Heart right ventricle (tissue), 16 donors: ENCODE measurements at regions of chr10 and their contacts with region 1.

Region 1: GRCh38 chr10:28532383-28533175 is at the start of gene WAC:
- DNase-seq: peak; percentile 96 to 98
- ATAC-seq: peak; percentile 95 to 98 (median 98)
- H3K4me3 ChIP-seq: peak within 1 kb of the TSS; percentile 81 to 94 (median 92)
- H3K27ac ChIP-seq: peak within 1 kb of the TSS; percentile 97 to 100 (median 99)
- H3K4me1 ChIP-seq: peaks cover 0 to 54% (median 44%) of the 10 kb centered on the region in 9 donors
- H3K27me3 ChIP-seq: no peaks in the 10 kb centered on the region
- CTCF ChIP-seq: peak in 3 of 9 donors; percentile 10 to 33 (median 15)
- total RNA-seq, gene WAC: 83.8 to 134 (median 95.3) TPM

Region 2: DNA sequence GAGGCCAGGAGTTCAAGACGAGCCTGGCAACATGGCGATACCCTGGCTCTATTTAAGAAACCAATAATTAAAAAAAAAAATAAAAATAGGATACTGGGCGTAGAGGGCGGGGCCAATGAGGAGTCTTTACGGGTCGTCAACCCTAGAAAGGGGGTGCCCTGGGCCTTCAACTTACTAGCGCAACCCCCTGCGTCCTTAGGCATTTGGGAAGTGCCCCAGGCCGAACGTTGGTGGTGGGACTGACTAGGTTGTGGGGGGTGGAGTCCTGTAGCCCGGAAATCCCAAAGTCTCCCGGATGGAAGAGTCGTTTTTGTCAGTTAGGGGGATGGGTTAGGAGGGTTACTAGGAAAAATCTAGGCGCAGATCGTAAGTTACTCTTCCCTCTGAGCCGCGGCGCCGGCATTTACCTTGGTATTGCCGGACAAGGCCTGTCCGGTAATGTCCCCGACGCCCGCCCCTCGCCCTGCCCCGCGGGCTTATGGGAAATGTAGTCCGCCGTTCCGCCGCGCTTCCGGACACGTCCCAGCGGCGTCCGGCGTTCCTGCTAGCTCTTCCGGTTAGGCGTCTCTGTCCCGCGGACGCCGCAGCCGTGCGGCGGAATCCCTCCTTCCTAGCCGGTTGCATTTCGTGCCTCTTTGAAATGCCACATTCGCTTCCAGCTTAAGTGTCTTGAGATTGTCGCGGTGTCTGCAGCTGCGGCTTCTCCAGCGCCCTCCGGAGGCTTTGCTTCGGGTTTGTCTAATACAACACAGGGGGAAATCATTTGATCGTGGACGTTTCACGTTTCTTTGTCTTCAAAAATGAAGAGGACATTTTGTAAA is 1290.7 kb before region 1 on chr10:
- intact Hi-C with region 1: loop called in 1 of 10 experiments (anchors 10 kb)
- DNase-seq: peak; percentile 91 to 93
- ATAC-seq: peak; percentile 90 to 95 (median 92)
- H3K4me3 ChIP-seq: peak overlapping the region; percentile 58 to 84 (median 76)
- H3K27ac ChIP-seq: peak overlapping the region; percentile 92 to 99 (median 96)
- H3K4me1 ChIP-seq: peaks cover 4 to 48% (median 40%) of the 10 kb centered on the region in 9 donors
- H3K27me3 ChIP-seq: no peaks in the 10 kb centered on the region
- CTCF ChIP-seq: peak in 8 of 9 donors; percentile 5 to 52 (median 36)

Region 3: DNA sequence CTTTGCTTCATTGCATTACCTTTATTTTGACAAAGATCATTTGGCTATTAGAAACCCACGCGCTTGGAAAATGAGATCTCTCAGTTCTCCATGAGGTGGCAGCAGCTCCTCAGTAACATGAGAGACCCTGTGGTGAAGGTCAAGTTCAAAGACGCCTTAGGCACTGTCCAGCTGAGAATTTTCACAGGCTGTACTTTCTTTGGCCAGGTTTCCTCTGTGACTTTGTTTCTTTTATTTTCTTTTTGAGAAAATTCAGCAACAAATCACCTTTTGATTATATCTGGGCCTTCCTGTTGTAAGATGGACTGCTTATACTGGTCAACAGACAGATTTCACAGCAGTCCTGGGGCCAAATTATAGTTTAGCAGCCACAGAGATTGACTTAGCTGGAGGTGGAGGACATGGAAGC is 974.0 kb before region 1 on chr10:
- intact Hi-C with region 1: no loop called
- DNase-seq: peak in 1 of 2 donors; percentile 66
- ATAC-seq: peak; percentile 67 to 93 (median 84)
- H3K4me3 ChIP-seq: no peak overlapping the region
- H3K27ac ChIP-seq: no peak overlapping the region
- H3K4me1 ChIP-seq: no peaks in the 10 kb centered on the region
- H3K27me3 ChIP-seq: no peaks in the 10 kb centered on the region
- CTCF ChIP-seq: peak; percentile 35 to 79 (median 72)

Region 4: GRCh38 chr10:28587970-28588290 is 55.4 kb after region 1 on chr10:
- intact Hi-C with region 1: loop called in 2 of 10 experiments (anchors 5 kb)
- DNase-seq: no peak
- ATAC-seq: peak; percentile 61 to 89 (median 82)
- H3K4me3 ChIP-seq: no peak overlapping the region
- H3K27ac ChIP-seq: peak overlapping the region in 4 of 10 donors; percentile 6 to 42 (median 26)
- H3K4me1 ChIP-seq: peaks cover 0 to 58% (median 37%) of the 10 kb centered on the region in 9 donors
- H3K27me3 ChIP-seq: no peaks in the 10 kb centered on the region
- CTCF ChIP-seq: peak in 8 of 9 donors; percentile 11 to 58 (median 38)

Region 5: GRCh38 chr10:29191674-29192073 is 659.1 kb after region 1 on chr10:
- intact Hi-C with region 1: no loop called
- DNase-seq: no peak
- ATAC-seq: no peak
- H3K4me3 ChIP-seq: no peak overlapping the region
- H3K27ac ChIP-seq: no peak overlapping the region
- H3K4me1 ChIP-seq: peaks cover 0 to 5% (median 0%) of the 10 kb centered on the region in 9 donors
- H3K27me3 ChIP-seq: peaks cover 0 to 3% (median 0%) of the 10 kb centered on the region in 7 donors
- CTCF ChIP-seq: no peak